ENCODE measurements at regions of chr12 and their contacts with region 1.

Region 1: GRCh38 chr12:79690638-79691493 is at the start of gene PAWR:
- DNase-seq: peak; percentile 80
- H3K4me3 ChIP-seq: peak within 1 kb of the TSS; percentile 82 to 94
- H3K27ac ChIP-seq: peak within 1 kb of the TSS; percentile 94
- H3K4me1 ChIP-seq: no peaks in the 10 kb centered on the region
- H3K27me3 ChIP-seq: no peaks in the 10 kb centered on the region
- CTCF ChIP-seq: peak in 2 of 4 experiments; percentile 28 to 52
- POLR2A ChIP-seq: peak; percentile 18
- total RNA-seq, gene PAWR: 46.4 to 58.7 TPM

Region 2: GRCh38 chr12:79420146-79420618 is 270.7 kb before region 1 on chr12:
- intact Hi-C with region 1: loop called (anchors 5 kb)
- DNase-seq: peak; percentile 22
- H3K4me3 ChIP-seq: no peak overlapping the region
- H3K27ac ChIP-seq: peak overlapping the region; percentile 36 to 40
- H3K4me1 ChIP-seq: peaks cover 3% of the 10 kb centered on the region
- H3K27me3 ChIP-seq: no peaks in the 10 kb centered on the region
- CTCF ChIP-seq: peak in 3 of 4 experiments; percentile 42 to 69 (median 57)
- POLR2A ChIP-seq: no peak

Region 3: GRCh38 chr12:79555028-79555930 is 135.6 kb before region 1 on chr12:
- intact Hi-C with region 1: loop called (anchors 5 kb)
- DNase-seq: no peak
- H3K4me3 ChIP-seq: no peak overlapping the region
- H3K27ac ChIP-seq: peak overlapping the region; percentile 82 to 83
- H3K4me1 ChIP-seq: peaks cover 3% of the 10 kb centered on the region
- H3K27me3 ChIP-seq: no peaks in the 10 kb centered on the region
- CTCF ChIP-seq: peak; percentile 40 to 94 (median 66)
- POLR2A ChIP-seq: no peak

Region 4: GRCh38 chr12:79629561-79629960 is 61.3 kb before region 1 on chr12:
- intact Hi-C with region 1: no loop called
- DNase-seq: no peak
- H3K4me3 ChIP-seq: no peak overlapping the region
- H3K27ac ChIP-seq: no peak overlapping the region
- H3K4me1 ChIP-seq: no peaks in the 10 kb centered on the region
- H3K27me3 ChIP-seq: no peaks in the 10 kb centered on the region
- CTCF ChIP-seq: no peak
- POLR2A ChIP-seq: no peak

Region 5: DNA sequence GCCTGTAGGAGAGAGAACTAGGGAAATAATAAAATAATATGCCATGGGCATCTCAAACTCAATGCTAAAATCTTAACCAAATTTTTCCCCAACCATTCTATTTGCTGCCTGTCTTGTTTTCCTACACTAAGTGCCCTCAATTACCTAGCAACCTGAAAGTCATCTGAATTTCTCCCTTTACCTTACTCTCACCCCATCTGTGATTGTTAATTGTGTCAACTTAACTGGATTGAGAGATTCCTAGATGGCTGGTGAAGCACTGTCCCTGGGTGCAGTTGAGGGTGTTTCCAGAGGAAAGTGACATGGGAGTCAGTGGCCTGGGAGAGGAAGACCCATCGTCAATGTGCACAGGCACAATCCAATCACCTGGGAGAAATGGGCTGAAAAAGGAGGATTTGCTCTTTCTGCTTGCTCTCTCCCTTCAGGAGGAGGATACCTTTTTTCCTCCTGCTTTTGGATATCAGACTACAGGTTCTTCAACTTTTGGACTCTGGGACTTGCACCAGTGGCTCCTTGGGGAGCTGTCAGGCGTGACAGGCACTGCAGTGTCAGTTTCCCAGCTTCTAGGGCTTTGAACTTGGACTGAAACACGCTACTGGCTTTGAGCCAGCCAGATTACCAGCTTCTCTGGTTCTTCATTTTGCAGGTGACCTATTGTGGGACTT is 144.0 kb after region 1 on chr12:
- intact Hi-C with region 1: no loop called
- DNase-seq: no peak
- H3K4me3 ChIP-seq: no peak overlapping the region
- H3K27ac ChIP-seq: no peak overlapping the region
- H3K4me1 ChIP-seq: no peaks in the 10 kb centered on the region
- H3K27me3 ChIP-seq: no peaks in the 10 kb centered on the region
- CTCF ChIP-seq: no peak
- POLR2A ChIP-seq: no peak

Region 6: DNA sequence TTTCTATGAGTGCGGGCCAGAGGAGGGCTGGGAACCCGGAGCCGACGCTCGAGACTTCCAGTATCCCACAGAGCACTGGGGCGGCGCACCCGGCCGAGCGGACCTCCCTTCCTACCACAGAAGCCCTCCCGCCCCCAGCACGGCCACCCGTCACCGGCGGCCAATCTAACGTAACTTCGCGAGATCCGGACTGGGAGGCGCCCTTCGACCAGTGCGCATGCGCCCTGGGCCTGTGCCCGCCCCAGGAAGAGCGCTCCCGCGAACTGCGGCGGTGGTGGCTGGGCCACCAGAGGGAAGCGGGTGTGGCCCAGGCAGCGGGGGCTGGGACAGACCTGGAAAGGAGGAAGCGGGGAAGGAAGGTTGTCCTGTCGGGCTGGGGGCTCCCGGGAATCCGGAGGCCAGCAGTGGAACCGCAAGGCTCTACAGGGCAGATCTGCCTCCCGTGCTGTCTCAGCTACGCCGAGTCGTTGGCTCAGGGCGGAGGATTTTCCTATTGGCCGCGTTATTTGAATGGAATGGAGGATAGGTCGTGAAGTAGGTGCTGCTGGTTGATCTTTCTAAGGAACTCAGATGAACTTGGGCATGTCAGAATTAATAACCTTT is 244.3 kb after region 1 on chr12 and contains the start of gene PPP1R12A:
- intact Hi-C with region 1: loop called (anchors 5 kb)
- DNase-seq: peak; percentile 94
- H3K4me3 ChIP-seq: peak within 1 kb of the TSS; percentile 92 to 94
- H3K27ac ChIP-seq: peak within 1 kb of the TSS; percentile 94 to 96
- H3K4me1 ChIP-seq: no peaks in the 10 kb centered on the region
- H3K27me3 ChIP-seq: no peaks in the 10 kb centered on the region
- CTCF ChIP-seq: peak in 2 of 4 experiments; percentile 41 to 49
- POLR2A ChIP-seq: peak; percentile 96
- total RNA-seq, gene PPP1R12A: 68.7 to 86.9 TPM